ENCODE measurements at regions of chr6 and their contacts with region 1.

Region 1: DNA sequence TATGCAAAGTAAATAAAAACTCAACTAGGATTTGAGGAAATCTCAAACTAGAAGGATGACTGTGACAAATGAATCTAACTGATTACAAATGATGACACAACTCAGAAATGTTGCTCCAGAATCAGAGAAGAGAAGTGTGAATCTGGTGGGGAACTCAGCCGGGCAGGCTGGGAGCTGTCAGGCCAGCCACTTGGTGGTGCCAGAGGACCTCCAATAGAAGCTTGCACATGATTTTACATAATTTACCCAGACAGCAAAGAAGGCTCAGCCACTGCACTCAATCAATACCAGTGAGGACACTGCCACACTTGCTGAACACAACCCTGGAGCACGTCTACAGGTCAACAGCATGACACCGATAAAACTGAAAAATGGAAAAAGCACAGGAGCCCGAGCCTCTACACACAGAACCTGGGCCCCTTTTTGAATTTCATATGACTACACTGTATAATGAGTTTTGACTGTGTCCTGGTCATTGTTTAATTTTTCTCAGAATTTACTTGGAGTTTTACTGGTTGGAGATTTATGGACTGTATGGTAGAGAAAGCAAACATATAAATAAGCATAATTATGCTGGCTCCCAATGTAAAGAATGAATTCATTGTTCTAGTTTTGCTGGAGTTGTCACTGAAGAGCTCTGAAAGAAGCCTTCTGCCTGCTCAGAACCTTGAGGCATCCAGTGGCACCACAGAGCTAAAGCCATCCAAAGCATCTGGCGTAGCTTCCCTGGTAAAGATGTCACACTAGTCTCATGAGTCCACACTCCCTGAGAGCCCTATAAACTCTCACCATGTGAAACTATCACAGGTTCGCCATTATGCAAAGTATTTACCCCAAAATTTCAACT is 296.5 kb downstream of the THBS2 start:
- DNase-seq: peak; percentile 90
- H3K4me3 ChIP-seq: 0 out of 2 replicates have a peak overlapping the region, but pooled peaks have one; percentile 12
- H3K27ac ChIP-seq: peak overlapping the region; percentile 36
- H3K4me1 ChIP-seq: peaks cover 8% of the 10 kb centered on the region
- H3K27me3 ChIP-seq: no peaks in the 10 kb centered on the region

Region 2: DNA sequence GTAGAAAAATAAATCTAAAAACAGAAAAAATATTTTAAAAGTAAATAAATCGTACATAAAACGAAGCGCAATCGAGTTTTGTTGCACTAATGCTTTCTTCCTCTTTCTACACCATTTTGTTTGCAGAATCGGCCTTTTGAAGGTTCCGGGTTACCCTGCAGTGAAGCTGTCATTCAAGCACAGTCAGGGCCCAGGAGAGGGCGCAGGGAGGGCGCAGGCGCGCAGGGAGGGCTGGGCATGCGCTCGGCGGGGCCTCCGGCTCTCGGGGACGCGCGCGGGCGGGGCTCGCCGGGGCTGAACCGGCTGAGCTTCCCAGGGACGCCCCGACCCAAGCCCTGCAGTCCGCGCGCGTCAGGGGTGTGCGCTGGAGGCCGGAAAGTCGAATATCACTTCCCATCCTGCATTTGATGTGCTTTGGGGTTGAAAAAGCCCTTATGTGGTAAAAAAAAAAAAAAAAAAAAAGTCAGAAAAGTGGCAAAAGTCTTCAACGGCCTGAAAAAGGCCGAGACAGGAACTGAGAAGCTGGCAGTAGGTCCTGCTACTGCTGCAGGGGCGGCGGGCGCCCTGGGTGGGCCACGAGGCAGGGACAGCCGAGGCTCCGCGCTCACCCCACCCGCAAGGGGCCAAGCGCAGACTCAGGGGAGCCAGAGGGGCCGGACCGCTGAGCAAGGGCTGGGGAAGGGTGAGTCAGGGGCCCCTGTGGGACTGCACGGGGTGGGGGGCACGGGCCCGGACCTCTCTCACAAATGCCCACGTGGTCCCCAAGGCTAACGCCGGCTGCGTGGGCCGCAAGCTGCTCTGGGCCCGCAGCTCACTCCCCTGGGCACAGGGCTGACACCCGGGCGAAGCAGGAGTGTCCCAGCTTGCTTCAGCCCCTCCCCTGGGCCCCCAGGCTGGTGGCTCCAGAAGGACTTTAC is 256.0 kb after region 1 on chr6:
- in situ Hi-C with region 1: loop called (anchors 25 kb)
- DNase-seq: peak; percentile 92
- H3K4me3 ChIP-seq: peak overlapping the region; percentile 51
- H3K27ac ChIP-seq: peak overlapping the region; percentile 97
- H3K4me1 ChIP-seq: peaks cover 23% of the 10 kb centered on the region
- H3K27me3 ChIP-seq: no peaks in the 10 kb centered on the region

Region 3: DNA sequence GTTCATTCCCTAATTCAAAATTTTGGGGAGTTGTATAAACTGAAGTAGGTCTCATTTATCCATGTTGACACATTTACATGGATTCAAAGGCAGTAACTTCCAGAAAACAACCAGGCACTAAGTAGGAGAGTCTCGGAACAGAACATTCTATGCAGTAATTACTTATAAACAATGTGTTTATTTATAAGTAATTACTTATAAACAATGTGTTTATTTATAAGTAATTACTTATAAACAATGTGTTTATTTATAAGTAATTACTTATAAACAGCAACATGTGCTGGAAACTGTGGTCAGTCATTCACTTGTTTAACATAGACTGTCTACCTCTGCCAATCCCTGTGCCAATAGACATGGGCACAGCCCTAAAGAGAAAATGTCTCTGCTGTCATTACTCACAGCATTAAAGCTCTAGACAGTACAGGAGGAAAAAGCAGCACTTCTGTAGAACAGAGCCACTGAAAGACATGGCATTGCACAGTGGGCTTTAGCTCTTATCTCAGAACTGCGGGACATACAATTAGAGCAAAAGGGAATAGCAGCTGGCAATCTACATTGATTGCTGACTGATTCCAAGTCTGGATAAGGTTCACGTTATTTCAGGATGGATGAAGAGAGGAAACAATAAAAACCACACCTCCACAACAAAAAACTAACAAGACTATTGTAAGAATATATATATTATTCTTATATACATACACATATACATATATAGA is 556.5 kb after region 1 on chr6:
- in situ Hi-C with region 1: loop called (anchors 10 kb)
- DNase-seq: no peak
- H3K4me3 ChIP-seq: no peak overlapping the region
- H3K27ac ChIP-seq: no peak overlapping the region
- H3K4me1 ChIP-seq: no peaks in the 10 kb centered on the region
- H3K27me3 ChIP-seq: no peaks in the 10 kb centered on the region